ENCODE measurements at regions of chr12 and their contacts with region 1.

Region 1: DNA sequence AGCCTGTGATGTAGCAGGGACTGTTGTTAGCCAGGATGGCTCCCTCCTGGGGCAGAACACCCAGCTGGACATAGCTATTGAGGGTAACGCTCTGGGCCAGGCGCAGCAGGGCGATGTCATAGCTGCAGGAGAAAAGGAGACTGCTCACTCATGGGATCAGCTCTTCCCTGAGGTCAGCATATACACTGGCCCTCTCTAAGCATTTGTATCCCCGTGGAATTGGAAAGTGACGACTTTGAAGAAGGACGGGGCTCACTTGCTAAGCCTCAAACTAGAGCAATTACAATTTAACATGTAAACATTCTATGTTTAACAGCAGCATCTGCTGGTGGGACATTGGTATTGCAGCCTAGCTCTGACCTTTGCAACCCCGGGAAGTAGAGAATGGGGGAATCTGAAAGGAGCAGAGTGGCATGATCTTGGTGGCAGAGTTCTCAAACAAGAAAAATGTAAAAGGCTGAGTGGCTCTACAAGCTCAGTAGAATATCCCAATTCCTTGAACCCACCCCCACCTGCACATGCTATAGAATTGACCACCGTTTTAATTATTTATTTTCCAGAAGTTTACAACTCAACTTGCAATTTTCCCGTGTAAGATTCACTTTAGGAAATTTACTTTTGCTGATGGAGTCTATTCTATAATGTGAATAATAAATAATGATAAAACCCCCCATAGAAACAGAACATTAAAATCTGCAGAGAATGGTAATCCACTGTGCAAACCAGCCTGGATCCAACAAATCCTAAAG is 5.0 kb downstream of the CELA1 start:
- DNase-seq: peak; percentile 74 to 82 (median 80)
- ATAC-seq: peak; percentile 92
- H3K4me3 ChIP-seq: no peak overlapping the region
- H3K27ac ChIP-seq: peak overlapping the region in 1 of 4 donors; percentile 42
- H3K4me1 ChIP-seq: peaks cover 4% of the 10 kb centered on the region
- H3K27me3 ChIP-seq: no peaks in the 10 kb centered on the region
- CTCF ChIP-seq: peak; percentile 82 to 97 (median 95)
- POLR2A ChIP-seq: no peak

Region 2: GRCh38 chr12:50825372-50825838 is 516.0 kb before region 1 on chr12:
- intact Hi-C with region 1: loop called (anchors 10 kb)
- DNase-seq: peak in 3 of 4 donors; percentile 18 to 30 (median 20)
- ATAC-seq: peak; percentile 93
- H3K4me3 ChIP-seq: no peak overlapping the region
- H3K27ac ChIP-seq: peak overlapping the region; percentile 65 to 76 (median 70)
- H3K4me1 ChIP-seq: peaks cover 14% of the 10 kb centered on the region
- H3K27me3 ChIP-seq: no peaks in the 10 kb centered on the region
- CTCF ChIP-seq: peak; percentile 16 to 84 (median 75)
- POLR2A ChIP-seq: no peak

Region 3: GRCh38 chr12:51172515-51173431 is 168.7 kb before region 1 on chr12 and contains the start of gene TFCP2:
- intact Hi-C with region 1: no loop called
- DNase-seq: peak; percentile 96 to 97 (median 96)
- ATAC-seq: peak; percentile 98
- H3K4me3 ChIP-seq: peak within 1 kb of the TSS; percentile 30 to 42
- H3K27ac ChIP-seq: peak within 1 kb of the TSS; percentile 86 to 100 (median 98)
- H3K4me1 ChIP-seq: peaks cover 15% of the 10 kb centered on the region
- H3K27me3 ChIP-seq: no peaks in the 10 kb centered on the region
- CTCF ChIP-seq: peak in 3 of 7 experiments; percentile 3 to 8 (median 3)
- POLR2A ChIP-seq: peak; percentile 30 to 80 (median 77)
- total RNA-seq, gene TFCP2: 7.9 to 9.9 TPM

Region 4: GRCh38 chr12:51270067-51270970 is 71.1 kb before region 1 on chr12 and contains the start of gene SMAGP:
- intact Hi-C with region 1: loop called (anchors 5 kb)
- DNase-seq: peak; percentile 85 to 88 (median 86)
- ATAC-seq: peak; percentile 81
- H3K4me3 ChIP-seq: peak within 1 kb of the TSS; percentile 59 to 77
- H3K27ac ChIP-seq: peak within 1 kb of the TSS; percentile 64 to 83 (median 82)
- H3K4me1 ChIP-seq: peaks cover 22% of the 10 kb centered on the region
- H3K27me3 ChIP-seq: no peaks in the 10 kb centered on the region
- CTCF ChIP-seq: peak in 1 of 7 experiments; percentile 1
- POLR2A ChIP-seq: peak in 2 of 3 donors; percentile 49 to 67
- total RNA-seq, gene SMAGP: 7.0 to 8.6 TPM

Region 5: DNA sequence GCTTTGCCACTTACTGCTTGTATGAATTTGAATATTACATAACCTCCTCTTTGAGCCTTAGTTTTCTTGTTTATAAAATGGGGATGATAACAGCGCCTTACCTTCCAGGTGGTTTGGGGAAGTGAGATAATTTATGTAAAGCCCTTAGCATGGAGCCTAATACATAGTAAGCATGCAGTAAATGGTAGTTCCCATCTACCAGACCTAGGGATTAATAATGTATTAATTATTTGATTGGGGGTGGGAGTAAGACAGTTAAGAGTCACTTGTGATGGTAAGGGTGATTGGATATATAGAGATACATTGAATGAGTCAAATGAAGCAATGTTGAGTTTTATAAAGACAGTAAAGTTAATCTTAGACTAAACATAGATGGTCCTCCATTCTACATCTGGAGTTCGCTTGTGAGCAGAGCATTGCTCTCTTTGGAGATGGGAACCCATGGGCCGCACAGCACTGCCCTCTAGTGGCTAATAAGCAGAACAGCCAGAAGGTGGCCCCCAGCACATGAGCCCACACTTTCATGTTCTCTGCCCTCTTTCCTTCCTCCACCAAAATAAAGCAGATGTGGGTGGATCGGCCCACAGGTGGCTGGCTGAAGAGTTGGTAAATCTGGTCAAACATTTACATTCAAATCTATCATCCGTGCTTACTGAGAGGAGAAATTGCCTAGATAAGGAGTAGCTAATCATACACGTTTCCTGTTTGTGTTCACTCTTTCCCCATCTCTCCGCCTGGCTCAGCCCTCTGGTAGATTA is 638.8 kb after region 1 on chr12:
- intact Hi-C with region 1: no loop called
- DNase-seq: peak; percentile 67 to 78 (median 73)
- ATAC-seq: peak; percentile 81
- H3K4me3 ChIP-seq: no peak overlapping the region
- H3K27ac ChIP-seq: peak overlapping the region in 3 of 4 donors; percentile 10 to 41 (median 24)
- H3K4me1 ChIP-seq: peaks cover 38% of the 10 kb centered on the region
- H3K27me3 ChIP-seq: no peaks in the 10 kb centered on the region
- CTCF ChIP-seq: peak; percentile 89 to 98 (median 94)
- POLR2A ChIP-seq: no peak